ENCODE measurements at regions of chr3 and their contacts with region 1.

Region 1: GRCh38 chr3:188082031-188082430 is 71.9 kb upstream of the LPP start:
- DNase-seq: no peak
- H3K4me3 ChIP-seq: no peak overlapping the region
- H3K27ac ChIP-seq: no peak overlapping the region
- H3K4me1 ChIP-seq: peaks cover 56% of the 10 kb centered on the region
- CTCF ChIP-seq: no peak

Region 2: DNA sequence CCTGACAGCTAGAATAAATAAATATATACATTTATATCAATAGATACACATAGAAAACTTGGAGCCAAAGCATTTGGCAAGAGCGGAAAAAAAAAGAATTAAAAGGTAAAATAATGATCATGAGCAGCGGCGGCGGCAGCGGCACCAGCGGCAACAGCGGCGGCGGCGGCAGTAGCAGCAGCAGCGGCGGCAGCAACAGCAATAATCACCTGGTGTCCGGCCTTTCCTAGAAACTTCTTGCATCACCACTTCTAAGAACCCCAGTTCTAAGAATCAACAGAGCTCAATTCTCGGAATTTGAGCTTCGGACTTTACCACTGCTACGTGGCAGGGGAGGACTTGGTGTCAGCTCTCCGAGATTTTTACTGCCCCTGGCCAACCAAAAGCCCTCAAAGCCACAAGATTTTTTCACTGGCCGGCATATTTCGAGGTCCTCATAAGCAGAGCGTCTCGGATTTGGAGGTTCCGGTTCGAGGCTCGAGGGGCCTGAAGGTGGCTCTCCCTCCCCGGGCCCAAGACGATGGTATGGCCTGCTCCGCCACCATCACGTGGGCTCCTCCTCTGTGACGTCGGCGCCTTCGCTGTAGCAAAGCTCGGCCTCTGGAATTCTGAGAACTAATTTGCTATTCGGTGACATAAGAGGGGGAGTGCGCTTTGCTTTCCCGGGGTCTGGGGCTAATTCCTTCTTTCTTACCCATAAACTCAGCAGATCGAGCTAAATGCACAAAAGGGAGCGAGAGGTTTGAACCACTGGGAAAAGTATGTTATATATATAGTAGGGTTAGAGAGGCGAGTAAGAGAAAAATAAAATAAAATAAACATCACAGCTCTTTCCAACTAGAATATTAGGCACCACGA is 336.6 kb before region 1 on chr3 and contains the start of gene BCL6:
- CTCF ChIA-PET with region 1: interaction called, 4 read pairs
- POLR2A ChIA-PET with region 1: interaction called, 66 read pairs
- intact Hi-C with region 1: loop called (anchors 1 kb)
- DNase-seq: peak; percentile 98
- H3K4me3 ChIP-seq: peak within 1 kb of the TSS; percentile 86
- H3K27ac ChIP-seq: peak within 1 kb of the TSS; percentile 90
- H3K4me1 ChIP-seq: peaks cover 39% of the 10 kb centered on the region
- CTCF ChIP-seq: no peak
- total RNA-seq, gene BCL6: 62.4 and 65.6 TPM in 2 replicates

Region 3: DNA sequence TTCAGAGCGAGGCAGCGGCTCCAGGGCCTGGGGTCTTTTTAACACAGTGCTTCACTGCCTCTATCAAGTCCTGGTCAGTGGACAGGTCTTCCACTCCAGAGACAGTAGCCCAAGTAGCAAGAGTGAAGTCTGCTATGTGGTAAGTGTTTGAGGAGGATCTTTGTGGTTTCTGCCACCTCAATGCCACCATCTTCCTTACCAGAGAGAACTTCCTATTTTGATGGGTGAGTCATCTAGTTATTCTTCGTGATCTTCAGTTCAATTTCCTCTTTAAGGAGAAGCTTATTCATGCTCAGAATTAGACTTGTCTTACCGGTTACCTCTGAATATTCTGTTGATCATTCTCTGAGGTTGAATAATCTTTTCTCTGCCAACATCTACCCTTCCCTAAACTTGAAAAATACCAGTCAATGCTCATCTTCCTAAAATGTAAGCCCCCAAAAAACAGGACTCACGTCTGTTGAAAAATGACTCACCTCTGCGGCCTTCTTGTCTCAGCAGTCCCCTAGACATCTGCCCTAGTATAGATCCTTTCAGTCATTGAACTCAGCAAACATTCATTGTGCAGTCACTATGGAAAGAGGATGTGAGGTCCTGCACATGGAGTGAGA is 304.6 kb before region 1 on chr3:
- CTCF ChIA-PET with region 1: no interaction called
- POLR2A ChIA-PET with region 1: no interaction called
- intact Hi-C with region 1: no loop called
- DNase-seq: no peak
- H3K4me3 ChIP-seq: no peak overlapping the region
- H3K27ac ChIP-seq: no peak overlapping the region
- H3K4me1 ChIP-seq: peaks cover 36% of the 10 kb centered on the region
- CTCF ChIP-seq: no peak

Region 4: GRCh38 chr3:187889601-187890404 is 192.2 kb before region 1 on chr3:
- CTCF ChIA-PET with region 1: no interaction called
- POLR2A ChIA-PET with region 1: no interaction called
- intact Hi-C with region 1: no loop called
- DNase-seq: peak; percentile 36
- H3K4me3 ChIP-seq: no peak overlapping the region
- H3K27ac ChIP-seq: no peak overlapping the region
- H3K4me1 ChIP-seq: peaks cover 8% of the 10 kb centered on the region
- CTCF ChIP-seq: no peak

Region 5: DNA sequence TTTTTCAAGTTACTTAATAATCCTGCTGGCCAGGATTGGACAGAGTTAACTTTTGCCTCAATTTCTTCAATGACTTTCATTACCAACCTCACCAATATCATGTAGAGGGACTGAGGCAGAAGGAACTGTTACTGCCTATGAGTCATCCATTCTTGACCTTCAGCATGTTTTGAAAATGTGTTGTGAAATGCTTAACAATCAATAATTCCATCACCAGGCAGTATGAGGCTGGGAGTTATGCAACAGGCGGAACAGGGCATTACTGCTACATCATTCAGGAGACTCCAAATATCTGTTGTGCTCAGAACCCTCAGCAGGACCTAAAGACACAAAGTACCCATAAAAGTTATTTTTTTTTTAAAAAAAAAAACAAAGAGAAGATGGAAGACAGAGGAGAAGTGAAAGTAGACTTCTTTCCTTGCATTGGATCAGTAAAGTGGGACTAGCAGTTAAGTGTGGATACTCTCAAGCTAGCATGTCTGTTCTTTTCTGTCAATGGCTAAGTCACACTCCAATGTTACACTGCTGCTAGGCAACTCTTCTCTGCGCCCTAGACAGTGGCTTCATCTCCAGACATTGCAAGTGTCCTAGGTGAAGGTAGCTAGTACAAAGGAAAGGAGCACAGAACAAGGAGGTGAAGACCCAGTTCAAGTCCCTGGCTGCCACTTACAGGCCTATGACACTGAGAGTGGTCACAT is 113.0 kb before region 1 on chr3:
- CTCF ChIA-PET with region 1: interaction called, 4 read pairs
- POLR2A ChIA-PET with region 1: interaction called, 174 read pairs
- intact Hi-C with region 1: loop called (anchors 1 kb)
- DNase-seq: no peak
- H3K4me3 ChIP-seq: peak overlapping the region; percentile 41
- H3K27ac ChIP-seq: peak overlapping the region; percentile 99
- H3K4me1 ChIP-seq: peaks cover 99% of the 10 kb centered on the region
- CTCF ChIP-seq: no peak; the same call in 1 of the 2 replicates

Region 6: GRCh38 chr3:188111002-188111584 is 29.1 kb after region 1 on chr3:
- CTCF ChIA-PET with region 1: no interaction called
- POLR2A ChIA-PET with region 1: interaction called, 10 read pairs
- intact Hi-C with region 1: no loop called
- DNase-seq: no peak
- H3K4me3 ChIP-seq: no peak overlapping the region
- H3K27ac ChIP-seq: no peak overlapping the region
- H3K4me1 ChIP-seq: peaks cover 57% of the 10 kb centered on the region
- CTCF ChIP-seq: no peak

Region 7: GRCh38 chr3:188244395-188244861 is 162.4 kb after region 1 on chr3:
- CTCF ChIA-PET with region 1: interaction called, 3 read pairs
- POLR2A ChIA-PET with region 1: interaction called, 37 read pairs
- intact Hi-C with region 1: loop called (anchors 1 kb)
- DNase-seq: peak; percentile 76
- H3K4me3 ChIP-seq: peak overlapping the region; percentile 21
- H3K27ac ChIP-seq: peak overlapping the region; percentile 98
- H3K4me1 ChIP-seq: peaks cover 96% of the 10 kb centered on the region
- CTCF ChIP-seq: no peak

Region 8: DNA sequence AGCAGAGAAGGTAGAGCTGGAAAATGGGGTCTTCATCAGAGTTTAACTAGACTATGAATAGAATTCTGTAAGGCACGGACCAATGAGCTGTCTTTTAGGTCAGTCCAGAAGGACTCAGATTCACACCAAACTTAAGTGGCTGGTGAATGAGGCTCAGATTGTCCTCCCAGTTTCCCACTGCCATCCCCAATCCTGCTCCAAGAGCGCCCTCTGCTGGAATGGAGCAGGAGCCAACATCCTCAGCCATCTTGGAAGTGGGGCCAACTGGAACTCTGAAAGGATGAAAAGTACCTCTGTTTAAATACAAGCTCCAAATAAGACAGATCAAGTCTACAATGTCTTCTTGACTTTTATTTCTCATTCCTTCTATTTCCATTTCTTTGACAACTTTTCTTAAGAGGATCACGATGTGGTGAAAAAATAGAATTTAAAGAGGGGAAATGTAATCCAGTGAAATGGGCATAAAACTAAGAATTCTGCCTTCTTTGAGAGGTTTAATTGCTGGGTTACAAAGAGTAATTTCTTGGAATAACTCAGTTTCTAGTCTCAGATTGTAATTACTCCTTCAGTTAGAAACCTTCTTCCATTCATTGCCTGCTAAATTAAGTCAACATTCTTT is 872.7 kb after region 1 on chr3:
- CTCF ChIA-PET with region 1: no interaction called
- POLR2A ChIA-PET with region 1: no interaction called
- intact Hi-C with region 1: loop called (anchors 5 kb)
- DNase-seq: peak; percentile 84
- H3K4me3 ChIP-seq: no peak overlapping the region
- H3K27ac ChIP-seq: no peak overlapping the region
- H3K4me1 ChIP-seq: peaks cover 12% of the 10 kb centered on the region
- CTCF ChIP-seq: peak; percentile 99

Region 9: GRCh38 chr3:188993181-188993580 is 911.1 kb after region 1 on chr3:
- CTCF ChIA-PET with region 1: no interaction called
- POLR2A ChIA-PET with region 1: no interaction called
- intact Hi-C with region 1: no loop called
- DNase-seq: no peak
- H3K4me3 ChIP-seq: no peak overlapping the region
- H3K27ac ChIP-seq: no peak overlapping the region
- H3K4me1 ChIP-seq: no peaks in the 10 kb centered on the region
- CTCF ChIP-seq: no peak

Measured in OCI-LY7 (cell line).